IMR-90 (cell line): ENCODE measurements at regions of chr12 and their contacts with region 1.

Region 1: GRCh38 chr12:5102261-5102789 is 58.6 kb downstream of the KCNA5 start:
- DNase-seq: peak; percentile 94
- ATAC-seq: peak; percentile 90
- H3K4me3 ChIP-seq: no peak overlapping the region
- H3K27ac ChIP-seq: peak overlapping the region; percentile 86
- H3K4me1 ChIP-seq: peaks cover 28% of the 10 kb centered on the region
- H3K27me3 ChIP-seq: no peaks in the 10 kb centered on the region
- CTCF ChIP-seq: no peak
- POLR2A ChIP-seq: no peak
- RAD21 ChIP-seq: no peak

Region 2: DNA sequence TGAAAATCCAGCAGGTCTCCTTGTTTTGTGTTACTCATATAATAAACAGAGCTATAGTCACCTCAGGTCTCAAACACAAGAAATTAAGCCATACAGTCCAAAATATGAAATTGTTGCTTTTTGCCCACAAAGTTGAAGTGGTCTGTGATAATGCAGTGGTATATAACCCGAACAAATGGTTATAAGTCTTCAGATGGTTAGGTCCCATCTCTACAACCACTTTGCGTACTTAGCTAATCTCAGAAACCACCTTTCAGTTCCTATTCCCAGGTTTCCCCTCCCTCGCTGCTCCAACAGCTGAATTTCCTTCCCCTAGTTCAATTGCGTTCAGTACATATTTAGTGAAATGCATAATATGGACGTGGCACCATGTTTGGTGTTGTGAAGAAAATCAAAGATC is 62.0 kb before region 1 on chr12:
- CTCF ChIA-PET with region 1: no interaction called
- POLR2A ChIA-PET with region 1: no interaction called
- dilution Hi-C with region 1: no loop called
- in situ Hi-C with region 1: no loop called
- intact Hi-C with region 1: no loop called
- DNase-seq: no peak
- ATAC-seq: no peak
- H3K4me3 ChIP-seq: no peak overlapping the region
- H3K27ac ChIP-seq: no peak overlapping the region
- H3K4me1 ChIP-seq: no peaks in the 10 kb centered on the region
- H3K27me3 ChIP-seq: peaks cover 57% of the 10 kb centered on the region
- CTCF ChIP-seq: no peak
- POLR2A ChIP-seq: no peak
- RAD21 ChIP-seq: no peak

Region 3: DNA sequence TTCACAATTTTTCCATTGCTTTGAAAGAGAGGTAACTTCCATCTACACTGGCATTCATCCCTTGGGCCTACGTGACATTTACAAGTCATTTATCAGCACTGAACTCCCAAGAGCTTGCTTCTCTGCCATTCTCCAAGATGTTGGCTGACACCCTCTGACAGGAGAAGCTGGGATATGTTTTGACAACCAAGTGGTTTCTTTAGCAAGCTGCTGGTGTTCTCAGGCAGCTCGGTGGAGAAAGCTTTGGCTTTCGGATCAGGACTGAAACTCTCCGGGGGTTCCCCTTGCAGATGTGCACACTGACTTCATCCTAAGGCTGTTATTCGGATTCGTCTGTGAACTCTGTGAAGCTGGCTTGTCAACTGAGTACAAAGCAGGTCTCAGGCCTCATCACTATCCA is 43.0 kb before region 1 on chr12:
- CTCF ChIA-PET with region 1: no interaction called
- POLR2A ChIA-PET with region 1: no interaction called
- dilution Hi-C with region 1: no loop called
- in situ Hi-C with region 1: no loop called
- intact Hi-C with region 1: no loop called
- DNase-seq: no peak
- ATAC-seq: no peak
- H3K4me3 ChIP-seq: no peak overlapping the region
- H3K27ac ChIP-seq: no peak overlapping the region
- H3K4me1 ChIP-seq: no peaks in the 10 kb centered on the region
- H3K27me3 ChIP-seq: peaks cover 43% of the 10 kb centered on the region
- CTCF ChIP-seq: no peak
- POLR2A ChIP-seq: no peak
- RAD21 ChIP-seq: no peak

Region 4: GRCh38 chr12:5138845-5139244 is 36.5 kb after region 1 on chr12:
- CTCF ChIA-PET with region 1: no interaction called
- POLR2A ChIA-PET with region 1: no interaction called
- dilution Hi-C with region 1: no loop called
- in situ Hi-C with region 1: no loop called
- intact Hi-C with region 1: no loop called
- DNase-seq: peak; percentile 74
- ATAC-seq: peak; percentile 53
- H3K4me3 ChIP-seq: no peak overlapping the region
- H3K27ac ChIP-seq: no peak overlapping the region
- H3K4me1 ChIP-seq: peaks cover 15% of the 10 kb centered on the region
- H3K27me3 ChIP-seq: no peaks in the 10 kb centered on the region
- CTCF ChIP-seq: no peak
- POLR2A ChIP-seq: no peak
- RAD21 ChIP-seq: no peak

Region 5: GRCh38 chr12:5262450-5262849 is 160.1 kb after region 1 on chr12:
- CTCF ChIA-PET with region 1: no interaction called
- POLR2A ChIA-PET with region 1: no interaction called
- dilution Hi-C with region 1: no loop called
- in situ Hi-C with region 1: no loop called
- intact Hi-C with region 1: loop called (anchors 10 kb)
- DNase-seq: peak; percentile 77
- ATAC-seq: peak; percentile 54
- H3K4me3 ChIP-seq: no peak overlapping the region
- H3K27ac ChIP-seq: no peak overlapping the region
- H3K4me1 ChIP-seq: peaks cover 16% of the 10 kb centered on the region
- H3K27me3 ChIP-seq: no peaks in the 10 kb centered on the region
- CTCF ChIP-seq: no peak
- POLR2A ChIP-seq: no peak
- RAD21 ChIP-seq: no peak

Region 6: GRCh38 chr12:5648692-5649359 is 546.5 kb after region 1 on chr12:
- CTCF ChIA-PET with region 1: no interaction called
- POLR2A ChIA-PET with region 1: no interaction called
- dilution Hi-C with region 1: no loop called
- in situ Hi-C with region 1: no loop called
- intact Hi-C with region 1: loop called (anchors 10 kb)
- DNase-seq: peak; percentile 58
- ATAC-seq: peak; percentile 88
- H3K4me3 ChIP-seq: no peak overlapping the region
- H3K27ac ChIP-seq: no peak overlapping the region
- H3K4me1 ChIP-seq: no peaks in the 10 kb centered on the region
- H3K27me3 ChIP-seq: peaks cover 17% of the 10 kb centered on the region
- CTCF ChIP-seq: peak; percentile 67
- POLR2A ChIP-seq: no peak
- RAD21 ChIP-seq: peak; percentile 74